ENCODE measurements at regions of chr10 and their contacts with region 1.

Region 1: GRCh38 chr10:50624866-50625692 is 1.3 kb upstream of the SGMS1 start:
- DNase-seq: peak; percentile 65 to 70
- H3K4me3 ChIP-seq: peak overlapping the region; percentile 67
- H3K27ac ChIP-seq: peak overlapping the region; percentile 89
- H3K4me1 ChIP-seq: peaks cover 29% of the 10 kb centered on the region
- H3K27me3 ChIP-seq: no peaks in the 10 kb centered on the region
- CTCF ChIP-seq: peak; percentile 65

Region 2: DNA sequence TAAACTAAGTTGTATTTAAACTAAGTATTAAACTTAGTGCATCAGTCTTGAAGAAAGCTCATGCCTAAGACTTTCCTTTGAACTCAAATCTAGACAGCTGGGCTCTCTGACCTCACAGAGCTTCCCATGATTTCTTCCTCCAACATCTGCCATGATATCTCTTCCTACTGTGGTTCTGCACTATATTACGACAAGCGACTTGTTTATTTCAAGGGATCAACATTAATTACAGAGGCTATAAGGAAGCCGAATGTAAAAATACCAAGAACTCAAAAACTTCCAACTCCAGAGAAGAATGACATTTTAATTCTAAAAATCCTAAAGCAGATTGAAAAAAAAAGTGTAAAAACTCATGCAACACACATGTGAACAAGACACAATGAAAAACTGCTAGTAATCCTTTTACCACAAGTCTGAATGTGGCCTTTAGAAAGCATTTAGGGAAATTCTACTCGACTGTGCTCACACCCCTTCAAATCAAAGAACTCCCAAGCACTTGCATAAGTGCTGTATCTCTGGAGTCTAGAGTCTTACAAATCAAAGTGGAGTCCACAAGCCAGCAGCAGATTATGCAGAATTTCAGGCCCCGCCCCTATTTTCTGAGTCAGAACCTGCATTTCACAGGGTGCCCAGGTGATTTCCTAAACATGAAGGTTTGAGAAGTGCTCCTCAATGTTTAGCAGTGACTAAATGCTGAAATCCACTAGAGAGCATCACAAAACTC is 580.0 kb before region 1 on chr10:
- CTCF ChIA-PET with region 1: no interaction called
- POLR2A ChIA-PET with region 1: no interaction called
- intact Hi-C with region 1: no loop called
- DNase-seq: no peak
- H3K4me3 ChIP-seq: no peak overlapping the region
- H3K27ac ChIP-seq: no peak overlapping the region
- H3K4me1 ChIP-seq: no peaks in the 10 kb centered on the region
- H3K27me3 ChIP-seq: no peaks in the 10 kb centered on the region
- CTCF ChIP-seq: no peak

Region 3: GRCh38 chr10:50275650-50276235 is 349.3 kb before region 1 on chr10:
- CTCF ChIA-PET with region 1: no interaction called
- POLR2A ChIA-PET with region 1: no interaction called
- intact Hi-C with region 1: loop called (anchors 5 kb)
- DNase-seq: peak; percentile 31 to 38
- H3K4me3 ChIP-seq: no peak overlapping the region
- H3K27ac ChIP-seq: no peak overlapping the region
- H3K4me1 ChIP-seq: peaks cover 11% of the 10 kb centered on the region; the same call in 1 of the 2 replicates
- H3K27me3 ChIP-seq: no peaks in the 10 kb centered on the region
- CTCF ChIP-seq: peak; percentile 75

Region 4: DNA sequence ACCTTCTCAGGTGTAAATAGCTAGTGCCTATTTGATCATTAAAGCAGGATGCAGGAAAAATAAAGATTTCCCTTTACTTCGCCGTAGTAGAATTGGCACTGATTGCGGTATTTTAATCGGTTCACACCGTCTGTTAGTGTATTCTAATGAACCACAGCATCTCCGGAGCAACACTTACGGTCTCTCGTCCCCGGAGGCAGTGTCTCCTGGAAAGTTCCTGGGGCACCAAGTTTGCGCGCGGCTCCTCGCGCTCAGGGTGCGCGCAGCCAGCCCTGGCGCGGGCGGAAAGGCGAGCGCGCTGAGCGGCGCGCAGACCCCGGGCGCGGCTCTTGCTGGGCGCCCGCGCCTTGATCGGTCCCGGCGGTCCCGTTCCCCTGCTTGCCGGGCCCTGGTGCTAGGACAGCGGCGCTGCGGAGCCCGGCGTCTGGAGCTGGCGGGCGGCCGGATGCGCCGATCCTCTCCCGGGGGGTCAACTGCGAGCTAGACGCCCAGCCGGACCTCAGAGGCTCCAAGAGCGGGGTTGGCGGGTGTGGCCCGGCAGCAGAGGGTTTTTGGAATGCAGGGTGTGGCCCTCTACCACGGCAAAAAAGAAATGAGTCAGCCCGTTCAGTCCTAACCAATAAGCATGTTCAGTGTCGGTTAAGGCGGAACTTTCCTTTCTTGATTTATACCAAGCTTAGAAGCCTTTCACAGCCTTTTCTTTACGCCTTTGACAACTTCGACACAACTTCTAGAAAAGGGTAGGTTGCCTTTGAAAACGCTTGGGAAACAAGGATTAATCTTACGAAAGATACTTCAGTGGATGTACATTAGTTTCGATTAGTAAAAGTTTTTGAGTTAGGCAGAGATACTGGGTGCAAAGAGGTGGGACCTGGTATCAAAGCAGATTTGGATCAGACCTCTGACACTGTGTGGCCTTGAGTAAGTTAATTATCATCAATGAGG is 206.9 kb before region 1 on chr10:
- CTCF ChIA-PET with region 1: no interaction called
- POLR2A ChIA-PET with region 1: interaction called, 5 read pairs
- intact Hi-C with region 1: loop called (anchors 1 kb)
- DNase-seq: peak; percentile 89 to 94
- H3K4me3 ChIP-seq: peak overlapping the region; percentile 96
- H3K27ac ChIP-seq: peak overlapping the region; percentile 92
- H3K4me1 ChIP-seq: peaks cover 53% of the 10 kb centered on the region
- H3K27me3 ChIP-seq: no peaks in the 10 kb centered on the region
- CTCF ChIP-seq: no peak

Region 5: DNA sequence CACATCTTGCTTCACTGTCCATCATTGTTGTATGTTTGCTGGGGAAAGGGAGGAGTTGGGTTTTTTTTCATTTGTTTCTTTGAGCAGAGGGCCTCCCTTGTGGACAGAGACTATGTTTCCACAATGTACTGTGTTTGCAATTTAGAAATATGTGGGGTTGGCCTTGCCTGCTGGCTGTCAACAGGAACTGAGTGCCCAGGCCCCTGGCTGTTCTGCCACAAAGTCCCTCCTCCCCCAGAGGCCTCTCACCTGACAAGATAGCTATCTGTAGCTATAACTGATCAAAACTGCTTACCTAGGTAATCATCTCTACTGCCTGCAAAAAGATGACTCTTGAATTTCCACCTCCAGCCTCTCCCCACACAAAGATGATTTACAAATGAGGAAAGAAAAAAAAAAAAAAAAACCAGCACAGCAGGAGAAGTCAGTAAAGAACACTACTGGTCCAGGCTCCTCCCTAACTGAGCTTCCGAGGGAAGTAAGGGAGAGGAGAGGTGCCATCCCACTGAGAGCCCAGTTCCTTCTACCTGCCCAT is 123.1 kb before region 1 on chr10:
- CTCF ChIA-PET with region 1: no interaction called
- POLR2A ChIA-PET with region 1: no interaction called
- intact Hi-C with region 1: loop called (anchors 2 kb)
- DNase-seq: peak; percentile 23 to 71
- H3K4me3 ChIP-seq: no peak overlapping the region
- H3K27ac ChIP-seq: peak overlapping the region; percentile 62
- H3K4me1 ChIP-seq: peaks cover 52% of the 10 kb centered on the region
- H3K27me3 ChIP-seq: no peaks in the 10 kb centered on the region
- CTCF ChIP-seq: no peak; the same call in 1 of the 2 replicates

Region 6: GRCh38 chr10:50579491-50580472 is 45.3 kb before region 1 on chr10:
- CTCF ChIA-PET with region 1: interaction called, 5 read pairs
- POLR2A ChIA-PET with region 1: interaction called, 6 read pairs
- intact Hi-C with region 1: loop called (anchors 1 kb)
- DNase-seq: peak in 1 of 2 experiments; percentile 96
- H3K4me3 ChIP-seq: peak overlapping the region; percentile 42
- H3K27ac ChIP-seq: peak overlapping the region; percentile 84
- H3K4me1 ChIP-seq: peaks cover 81% of the 10 kb centered on the region
- H3K27me3 ChIP-seq: no peaks in the 10 kb centered on the region
- CTCF ChIP-seq: no peak

Region 7: DNA sequence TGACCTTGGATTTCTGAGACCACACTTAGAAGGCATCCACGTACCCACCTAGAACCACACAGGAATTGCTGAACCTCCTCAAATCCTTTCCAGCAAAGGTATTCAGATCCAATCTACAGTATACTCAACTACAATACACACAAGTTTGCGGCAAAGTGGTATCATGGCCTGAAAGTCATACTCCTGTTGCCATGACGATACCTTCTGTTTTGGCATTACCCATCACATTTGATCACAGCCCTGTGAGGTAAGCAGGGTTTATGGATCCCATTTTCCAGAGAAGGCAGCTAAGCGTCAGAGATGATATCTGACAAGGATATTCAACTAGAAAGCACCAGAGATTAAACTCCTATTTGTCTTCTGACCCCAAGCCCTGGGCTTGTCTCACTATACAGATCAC is 34.1 kb before region 1 on chr10:
- CTCF ChIA-PET with region 1: no interaction called
- POLR2A ChIA-PET with region 1: no interaction called
- intact Hi-C with region 1: no loop called
- DNase-seq: no peak
- H3K4me3 ChIP-seq: no peak overlapping the region
- H3K27ac ChIP-seq: no peak overlapping the region
- H3K4me1 ChIP-seq: peaks cover 14% of the 10 kb centered on the region
- H3K27me3 ChIP-seq: no peaks in the 10 kb centered on the region
- CTCF ChIP-seq: no peak

Region 8: DNA sequence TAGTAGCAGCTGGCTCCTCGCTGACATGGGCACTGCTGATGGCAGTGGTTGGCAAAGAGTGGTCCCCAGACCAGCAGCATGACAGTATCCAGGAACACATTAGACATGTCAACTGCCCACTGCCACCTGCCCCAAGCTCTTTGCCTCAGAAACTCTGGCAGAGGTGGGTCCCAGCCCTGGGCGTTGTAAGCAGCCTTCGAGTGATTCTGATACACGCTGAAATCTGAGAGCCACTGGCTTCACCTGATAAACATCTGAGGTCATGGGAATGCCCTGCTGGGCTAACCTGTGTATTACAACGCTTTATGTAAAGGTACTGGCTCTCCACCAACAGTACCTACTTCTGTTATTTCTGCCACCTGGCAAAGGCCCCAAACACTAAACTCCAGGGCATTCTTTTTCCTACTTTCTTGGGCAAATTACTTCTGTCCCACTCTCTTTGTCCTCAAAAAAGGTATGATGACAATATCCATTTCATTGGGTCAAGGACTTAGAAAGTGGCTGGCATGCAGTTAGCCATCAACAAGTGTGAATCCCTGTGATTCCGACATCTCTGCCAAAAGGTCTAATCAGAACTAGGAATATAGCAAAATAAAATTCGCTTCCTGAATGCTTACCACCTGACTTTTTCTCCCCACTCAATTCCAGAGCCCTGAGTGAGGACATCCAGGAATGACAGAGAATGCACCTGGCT is 10.5 kb before region 1 on chr10:
- CTCF ChIA-PET with region 1: no interaction called
- POLR2A ChIA-PET with region 1: no interaction called
- intact Hi-C with region 1: no loop called
- DNase-seq: peak; percentile 58 to 66
- H3K4me3 ChIP-seq: no peak overlapping the region
- H3K27ac ChIP-seq: no peak overlapping the region
- H3K4me1 ChIP-seq: peaks cover 30% of the 10 kb centered on the region
- H3K27me3 ChIP-seq: no peaks in the 10 kb centered on the region
- CTCF ChIP-seq: peak; percentile 70

Measured in PC-9 (cell line).